Activated T-helper 2 cell treated with anti-CD3 and anti-CD28 coated beads, Interferon-gamma antibody, Interleukin-2, Interleukin-4, amounts not matched to agents 10 μg/mL and 5 μg/mL and 100 μg/mL, durations not matched to agents 14 hours and 24 hours and 36 hours (primary cell): ENCODE measurements at regions of chr6 and their contacts with region 1.

Region 1: DNA sequence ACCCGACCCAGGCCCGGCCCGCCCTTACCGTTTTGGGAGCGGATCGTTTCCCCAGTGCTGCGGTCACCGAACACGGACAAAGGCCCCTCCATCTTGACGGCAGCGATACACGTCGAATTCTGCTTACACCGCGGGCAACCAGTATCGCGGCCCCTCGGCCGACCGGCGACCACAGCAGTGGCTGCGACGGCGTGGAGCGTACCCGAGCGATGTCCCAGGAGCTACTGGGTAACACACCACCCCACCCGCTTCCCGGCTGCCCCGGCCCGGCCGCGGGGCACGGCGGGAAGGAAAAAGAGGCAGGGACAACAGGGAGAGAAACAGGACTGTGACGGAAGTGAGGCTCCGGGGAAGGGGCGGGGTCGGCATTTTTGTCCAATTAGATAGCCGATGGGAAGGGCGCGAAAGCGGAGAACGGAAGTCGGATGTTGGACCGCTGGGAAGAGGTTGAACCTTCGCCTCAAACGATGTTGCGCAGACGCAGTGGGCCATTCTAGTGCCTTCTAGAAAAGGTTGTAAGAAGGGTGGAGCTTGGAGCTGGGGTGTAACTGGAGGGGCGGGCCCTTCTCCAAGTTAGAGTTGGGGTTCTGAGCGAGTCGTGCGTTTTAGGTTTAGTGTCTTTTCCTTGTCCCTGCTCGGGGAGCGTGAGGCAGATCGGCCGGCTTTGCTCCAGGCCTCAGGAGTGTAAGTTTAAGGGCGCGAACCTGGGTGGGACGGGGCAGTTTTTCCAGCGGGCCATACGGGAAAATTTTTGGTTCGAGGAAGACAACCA is at the start of gene TCP1:
- DNase-seq: peak; percentile 99
- H3K4me3 Mint-ChIP-seq: peak within 1 kb of the TSS; percentile 96
- H3K27ac Mint-ChIP-seq: peak within 1 kb of the TSS; percentile 97
- H3K4me1 Mint-ChIP-seq: peaks cover 46% of the 10 kb centered on the region
- H3K27me3 Mint-ChIP-seq: no peaks in the 10 kb centered on the region
- total RNA-seq, gene TCP1: 431 and 438 TPM in 2 replicates

Region 2: GRCh38 chr6:159726918-159727716 is 62.4 kb before region 1 on chr6 and contains the start of gene WTAP:
- intact Hi-C with region 1: loop called (anchors 1 kb)
- DNase-seq: peak; percentile 95
- H3K4me3 Mint-ChIP-seq: peak within 1 kb of the TSS; percentile 94
- H3K27ac Mint-ChIP-seq: peak within 1 kb of the TSS; percentile 99
- H3K4me1 Mint-ChIP-seq: peaks cover 38% of the 10 kb centered on the region
- H3K27me3 Mint-ChIP-seq: no peaks in the 10 kb centered on the region
- total RNA-seq, gene WTAP: 110 and 114 TPM in 2 replicates

Region 3: DNA sequence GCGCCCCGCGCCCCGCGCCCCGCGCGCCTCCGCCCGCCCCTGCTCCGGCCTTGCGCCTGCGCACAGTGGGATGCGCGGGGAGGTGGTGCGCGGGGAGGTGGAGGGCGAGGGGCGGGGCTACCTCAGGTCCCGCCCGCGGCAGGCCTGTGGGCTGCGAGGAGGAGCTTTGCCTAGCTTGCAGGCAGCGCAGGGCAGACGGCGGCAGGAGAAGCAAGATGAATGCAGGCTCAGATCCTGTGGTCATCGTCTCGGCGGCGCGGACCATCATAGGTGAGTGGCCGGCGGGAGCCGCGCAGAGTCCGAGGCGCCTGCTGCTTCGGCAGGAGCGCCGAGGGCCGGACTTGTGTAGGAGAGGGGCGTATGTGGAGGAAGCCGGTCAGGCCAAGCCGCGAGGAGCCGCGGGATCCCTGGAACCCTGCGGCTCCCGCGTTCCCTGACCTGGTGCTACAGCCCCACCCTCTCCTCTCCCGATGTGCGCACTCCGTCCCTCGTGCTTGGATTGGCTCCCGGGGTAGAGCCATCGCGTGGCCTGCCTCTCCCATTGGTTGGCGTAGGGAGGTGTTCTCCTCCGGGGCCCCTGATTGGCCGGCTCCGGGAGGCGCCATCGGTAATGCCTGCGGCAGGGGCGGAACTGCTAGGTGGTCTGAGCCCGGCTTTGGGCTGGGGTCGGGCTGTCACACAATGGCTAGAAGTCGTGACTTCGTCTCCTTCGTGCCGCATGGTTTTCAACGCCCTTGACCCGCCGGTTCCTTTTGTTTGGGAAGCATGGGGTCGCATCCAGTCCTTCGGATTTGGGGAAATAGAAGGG is 27.5 kb before region 1 on chr6 and contains the start of gene ACAT2:
- intact Hi-C with region 1: loop called (anchors 1 kb)
- DNase-seq: peak; percentile 91
- H3K4me3 Mint-ChIP-seq: peak within 1 kb of the TSS; percentile 93
- H3K27ac Mint-ChIP-seq: peak within 1 kb of the TSS; percentile 93
- H3K4me1 Mint-ChIP-seq: peaks cover 46% of the 10 kb centered on the region
- H3K27me3 Mint-ChIP-seq: no peaks in the 10 kb centered on the region
- total RNA-seq, gene ACAT2: 108 and 109 TPM in 2 replicates

Region 4: DNA sequence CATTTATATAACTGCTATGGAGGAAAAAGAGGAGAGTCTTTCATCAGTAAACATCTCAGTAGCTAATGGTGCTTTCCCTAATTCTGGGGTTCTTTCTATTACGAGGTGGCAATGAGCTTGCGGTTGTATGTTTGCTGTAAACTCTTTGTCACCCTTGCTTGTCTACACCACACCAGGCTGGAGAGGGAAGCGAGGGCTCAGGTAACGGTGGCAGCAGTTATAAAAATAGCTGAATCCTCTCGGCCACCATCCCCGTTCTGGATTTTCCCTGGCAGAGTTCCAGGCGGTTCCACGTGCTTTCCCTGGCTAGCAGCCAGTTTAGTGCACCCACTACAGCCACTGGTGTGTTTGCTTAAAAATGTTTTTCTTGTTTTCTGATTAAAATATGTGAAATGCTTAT is 140.3 kb after region 1 on chr6:
- intact Hi-C with region 1: loop called (anchors 2 kb)
- DNase-seq: no peak
- H3K4me3 Mint-ChIP-seq: no peak overlapping the region
- H3K27ac Mint-ChIP-seq: peak overlapping the region; percentile 5
- H3K4me1 Mint-ChIP-seq: peaks cover 28% of the 10 kb centered on the region
- H3K27me3 Mint-ChIP-seq: peaks cover 9% of the 10 kb centered on the region

Region 5: GRCh38 chr6:159968440-159969203 is 179.1 kb after region 1 on chr6 and contains the start of gene IGF2R:
- intact Hi-C with region 1: loop called (anchors 2 kb)
- DNase-seq: peak; percentile 88
- H3K4me3 Mint-ChIP-seq: peak within 1 kb of the TSS; percentile 95
- H3K27ac Mint-ChIP-seq: peak within 1 kb of the TSS; percentile 89
- H3K4me1 Mint-ChIP-seq: peaks cover 33% of the 10 kb centered on the region
- H3K27me3 Mint-ChIP-seq: peaks cover 18% of the 10 kb centered on the region
- total RNA-seq, gene IGF2R: 75.0 and 82.4 TPM in 2 replicates